ENCODE measurements at regions of chr12 and their contacts with region 1.

Region 1: GRCh38 chr12:108514973-108515814 is at the start of gene FICD:
- DNase-seq: peak; percentile 100
- H3K4me3 Mint-ChIP-seq: peak within 1 kb of the TSS; percentile 90
- H3K27ac Mint-ChIP-seq: peak within 1 kb of the TSS; percentile 84
- H3K4me1 Mint-ChIP-seq: peaks cover 28% of the 10 kb centered on the region
- H3K27me3 Mint-ChIP-seq: no peaks in the 10 kb centered on the region
- total RNA-seq, gene FICD: 3.4 to 3.7 TPM

Region 2: DNA sequence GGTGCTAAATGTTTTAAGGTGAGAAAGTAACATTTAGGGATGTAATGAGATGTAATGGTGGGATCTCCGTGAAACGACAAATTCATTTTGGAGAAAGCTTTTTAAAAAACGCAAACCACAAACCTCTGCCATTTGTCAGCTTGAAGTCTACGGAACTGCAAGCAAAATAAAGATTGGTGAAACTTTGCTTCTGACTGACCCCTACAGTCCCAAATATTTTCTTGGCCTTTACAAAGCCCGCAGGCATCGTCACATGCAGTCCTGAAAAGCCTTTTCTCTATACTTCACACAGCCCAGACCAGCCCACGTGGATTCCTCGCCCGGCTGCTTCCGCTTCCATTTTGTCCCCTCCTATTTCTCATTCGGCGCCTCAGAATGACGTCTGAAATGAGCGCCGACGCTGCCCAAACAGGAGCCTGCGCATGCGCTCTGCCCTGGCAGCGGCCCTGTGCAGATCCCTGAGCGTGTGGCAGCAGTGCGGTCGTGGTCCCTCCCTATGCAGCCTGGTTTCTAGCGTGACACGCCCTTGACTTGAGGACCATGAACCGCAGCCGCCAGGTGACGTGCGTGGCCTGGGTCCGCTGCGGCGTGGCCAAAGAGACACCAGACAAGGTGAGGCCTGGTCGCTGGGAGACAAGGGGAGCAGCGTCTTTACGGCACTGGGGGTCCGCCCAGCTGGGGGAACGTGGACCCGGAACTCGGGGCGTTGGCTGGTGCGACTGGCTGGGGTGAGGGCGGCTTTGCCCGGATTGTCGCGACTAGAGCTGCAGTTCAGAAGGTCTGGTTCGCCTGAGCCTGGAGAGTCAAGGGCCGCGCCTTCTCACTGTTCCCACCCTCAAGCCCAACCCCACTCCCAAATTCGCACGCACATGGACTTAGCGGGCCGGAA is 829.6 kb before region 1 on chr12 and contains the start of gene PWP1:
- CTCF ChIA-PET with region 1: no interaction called
- intact Hi-C with region 1: loop called (anchors 1 kb)
- DNase-seq: peak; percentile 95
- H3K4me3 Mint-ChIP-seq: peak within 1 kb of the TSS; percentile 90
- H3K27ac Mint-ChIP-seq: peak within 1 kb of the TSS; percentile 95
- H3K4me1 Mint-ChIP-seq: peaks cover 20% of the 10 kb centered on the region
- H3K27me3 Mint-ChIP-seq: no peaks in the 10 kb centered on the region
- total RNA-seq, gene PWP1: 35.0 to 37.1 TPM

Region 3: DNA sequence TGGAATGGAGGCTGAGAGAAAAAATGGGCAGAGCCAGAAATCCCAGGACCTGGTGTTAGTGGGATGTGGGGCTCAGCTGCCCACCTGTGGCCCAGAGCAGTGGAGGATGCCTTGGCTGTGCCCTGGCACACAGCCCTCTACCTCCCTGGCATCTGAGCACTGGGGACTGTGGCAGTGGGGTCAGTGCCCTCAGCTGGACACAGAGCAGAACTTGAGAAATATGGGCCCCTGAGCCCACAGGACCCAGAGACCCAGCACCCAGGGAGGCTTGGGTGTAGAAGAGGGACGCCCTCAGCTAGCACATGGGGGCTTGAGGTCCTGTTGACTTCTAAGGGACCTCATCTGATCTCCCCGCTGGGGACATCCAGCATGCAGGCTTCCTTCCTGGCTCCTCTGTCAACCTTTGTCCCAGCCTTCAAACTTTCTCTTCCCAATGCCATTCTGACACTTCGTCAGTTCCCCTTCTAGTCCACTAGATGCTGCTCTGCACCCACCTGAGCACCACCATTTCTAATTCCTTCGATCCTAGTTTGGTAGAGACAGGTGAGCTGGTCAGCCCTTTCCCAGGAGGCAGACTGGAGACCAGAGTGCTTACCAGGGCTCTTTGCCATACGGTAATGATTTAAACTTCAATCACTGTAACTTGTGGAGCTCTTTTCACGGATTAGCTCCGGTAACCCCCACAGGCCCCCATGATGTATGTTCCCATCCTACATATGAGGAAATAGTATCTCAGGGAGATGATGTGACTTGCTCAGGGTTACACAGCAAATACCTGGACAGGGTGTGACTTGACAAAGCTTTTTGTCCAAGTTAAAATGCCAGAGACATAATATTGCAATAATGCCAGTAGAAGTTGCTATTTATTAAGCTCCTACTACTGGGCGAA is 597.0 kb before region 1 on chr12:
- CTCF ChIA-PET with region 1: no interaction called
- intact Hi-C with region 1: loop called (anchors 1 kb)
- DNase-seq: peak; percentile 18
- H3K4me3 Mint-ChIP-seq: no peak overlapping the region
- H3K27ac Mint-ChIP-seq: no peak overlapping the region
- H3K4me1 Mint-ChIP-seq: no peaks in the 10 kb centered on the region
- H3K27me3 Mint-ChIP-seq: peaks cover 32% of the 10 kb centered on the region

Region 4: GRCh38 chr12:108063192-108063591 is 452.0 kb before region 1 on chr12:
- CTCF ChIA-PET with region 1: no interaction called
- intact Hi-C with region 1: loop called (anchors 1 kb)
- DNase-seq: no peak
- H3K4me3 Mint-ChIP-seq: no peak overlapping the region
- H3K27ac Mint-ChIP-seq: no peak overlapping the region
- H3K4me1 Mint-ChIP-seq: no peaks in the 10 kb centered on the region
- H3K27me3 Mint-ChIP-seq: peaks cover 12% of the 10 kb centered on the region

Region 5: DNA sequence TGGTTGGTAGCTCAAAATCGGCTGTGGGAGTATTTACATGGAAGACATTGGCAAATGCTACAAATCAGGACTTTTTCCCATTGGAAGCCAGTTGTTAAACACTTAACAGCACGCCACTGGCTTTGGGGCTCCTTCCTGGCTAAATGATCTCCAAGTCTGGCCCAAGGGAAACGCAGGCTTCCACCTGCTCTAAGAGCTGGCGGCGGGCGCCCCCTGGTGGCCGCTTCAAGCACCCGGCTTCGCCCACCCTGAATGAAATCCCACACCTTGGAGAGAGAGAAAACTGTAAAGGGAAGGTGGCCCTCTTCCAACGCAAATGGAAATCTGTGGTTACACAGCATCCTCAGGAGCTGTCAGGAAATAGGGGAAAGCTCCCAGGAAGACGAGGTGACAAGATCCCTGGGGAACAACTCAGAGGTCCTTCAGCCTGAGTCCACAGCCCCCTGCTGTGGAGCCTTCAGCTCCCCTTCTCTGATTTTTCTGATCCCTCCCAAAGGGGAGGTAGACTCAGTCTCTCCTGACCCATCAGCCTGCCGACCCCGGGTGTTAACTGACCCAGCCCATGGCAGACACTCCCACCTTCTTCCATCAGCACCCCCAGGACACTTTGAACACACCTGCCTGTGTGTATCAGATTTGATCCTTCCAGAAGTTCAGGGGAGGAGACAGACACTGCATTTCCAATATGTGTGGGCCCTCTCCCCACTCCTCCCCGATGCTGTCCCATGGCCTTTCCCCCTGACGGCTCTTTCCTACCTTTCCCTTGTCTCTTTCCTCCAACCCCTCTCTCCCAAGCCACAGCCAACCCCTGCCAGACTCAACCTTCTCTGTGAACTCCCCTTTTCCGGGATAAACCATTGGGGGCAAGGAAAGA is 103.1 kb after region 1 on chr12:
- CTCF ChIA-PET with region 1: interaction called, 7 read pairs
- intact Hi-C with region 1: loop called (anchors 1 kb)
- DNase-seq: peak; percentile 81
- H3K4me3 Mint-ChIP-seq: no peak overlapping the region
- H3K27ac Mint-ChIP-seq: peak overlapping the region; percentile 20
- H3K4me1 Mint-ChIP-seq: peaks cover 36% of the 10 kb centered on the region
- H3K27me3 Mint-ChIP-seq: no peaks in the 10 kb centered on the region

Region 6: DNA sequence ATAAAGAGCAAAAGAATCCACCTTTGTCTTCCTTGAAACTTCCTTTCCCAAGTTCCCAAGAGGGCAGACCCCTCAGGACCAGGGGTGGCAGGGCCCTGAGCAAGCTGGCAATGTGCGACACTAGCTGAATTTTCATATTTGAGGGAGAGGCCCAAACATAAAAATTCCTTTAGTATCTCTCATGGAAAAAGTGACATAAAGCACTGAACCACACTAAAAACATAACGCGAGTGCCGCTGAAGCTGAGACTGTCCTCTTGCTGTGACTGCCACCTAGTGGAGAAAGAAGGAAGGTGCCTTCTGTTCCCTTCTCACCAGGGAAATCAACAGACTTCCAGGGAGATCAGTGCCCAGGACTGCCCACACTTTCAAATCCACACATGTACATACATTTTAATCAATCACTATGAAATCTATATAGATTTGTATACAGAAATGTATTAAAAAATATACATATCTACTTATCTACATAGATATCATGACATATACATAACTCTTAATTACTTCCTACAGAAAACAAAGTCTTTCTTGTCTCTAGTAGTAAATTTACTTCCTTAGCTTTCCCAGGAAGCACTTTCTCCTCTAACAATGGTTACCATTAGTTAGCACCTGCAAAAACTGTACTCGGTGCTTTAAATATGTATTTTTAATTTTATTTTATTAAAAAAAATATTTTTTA is 288.4 kb after region 1 on chr12:
- CTCF ChIA-PET with region 1: no interaction called
- intact Hi-C with region 1: loop called (anchors 5 kb)
- DNase-seq: peak; percentile 83
- H3K4me3 Mint-ChIP-seq: no peak overlapping the region
- H3K27ac Mint-ChIP-seq: peak overlapping the region; percentile 76
- H3K4me1 Mint-ChIP-seq: peaks cover 7% of the 10 kb centered on the region
- H3K27me3 Mint-ChIP-seq: no peaks in the 10 kb centered on the region

Measured in activated naive CD4-positive, alpha-beta T cell treated with anti-CD3 and anti-CD28 coated beads for 36 hours (primary cell).